ENCODE measurements at regions of chr11 and their contacts with region 1.

Region 1: GRCh38 chr11:62665075-62665598 is at the starts of genes C11orf98 and CSKMT:
- DNase-seq: peak; percentile 95
- H3K4me3 ChIP-seq: peak within 1 kb of the TSS; percentile 42 to 83 (median 59)
- H3K27ac ChIP-seq: peak within 1 kb of the TSS; percentile 44
- H3K4me1 ChIP-seq: peaks cover 16% of the 10 kb centered on the region
- H3K27me3 ChIP-seq: no peaks in the 10 kb centered on the region
- CTCF ChIP-seq: no peak
- POLR2A ChIP-seq: peak; percentile 100
- total RNA-seq, gene C11orf98: 58.7 and 61.0 TPM in 2 replicates
- total RNA-seq, gene CSKMT: 28.4 and 38.1 TPM in 2 replicates

Region 2: DNA sequence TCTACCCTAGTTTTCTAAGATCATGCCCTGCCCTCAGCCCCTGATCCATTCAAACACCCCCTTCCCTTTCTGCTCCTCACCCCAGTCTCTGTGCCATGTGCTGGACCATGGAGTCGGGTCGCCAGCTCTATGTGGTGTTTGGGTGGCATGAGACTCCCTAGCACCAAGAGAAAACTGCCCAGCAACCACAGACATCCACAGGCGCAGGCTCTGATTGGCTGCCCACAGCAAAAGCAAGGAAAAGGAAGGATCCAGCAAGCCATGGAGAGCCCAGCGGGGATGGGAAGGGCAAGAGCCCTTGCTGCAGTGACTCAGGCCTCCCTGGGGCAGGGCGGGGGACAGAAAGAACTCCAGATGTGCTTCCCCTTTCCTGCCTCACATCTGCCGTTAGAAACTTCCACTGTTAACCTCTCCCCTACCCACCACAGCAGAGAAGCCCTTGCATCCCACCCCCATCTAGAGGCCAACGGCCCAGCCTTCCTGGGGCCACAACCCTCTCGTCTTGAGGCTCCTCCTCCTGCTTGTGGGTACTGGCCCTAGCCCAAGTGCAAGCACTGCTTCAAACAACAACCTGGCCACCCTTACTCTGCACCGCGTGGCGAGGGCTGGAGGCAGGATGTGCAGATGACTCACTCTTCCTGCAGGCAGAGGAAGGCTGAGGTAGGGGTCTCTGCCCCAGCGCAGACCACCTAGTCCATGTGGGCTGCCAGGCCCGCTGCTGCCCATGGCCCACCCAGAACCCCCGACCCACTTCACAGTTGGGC is 108.8 kb before region 1 on chr11:
- CTCF ChIA-PET with region 1: no interaction called
- POLR2A ChIA-PET with region 1: interaction called, 10 read pairs
- dilution Hi-C with region 1: no loop called
- intact Hi-C with region 1: no loop called
- DNase-seq: peak; percentile 94
- H3K4me3 ChIP-seq: peak overlapping the region in 1 of 3 experiments; percentile 6
- H3K27ac ChIP-seq: peak overlapping the region; percentile 56
- H3K4me1 ChIP-seq: peaks cover 75% of the 10 kb centered on the region
- H3K27me3 ChIP-seq: no peaks in the 10 kb centered on the region
- CTCF ChIP-seq: no peak
- POLR2A ChIP-seq: peak; percentile 80

Region 3: GRCh38 chr11:62601394-62602140 is 63.6 kb before region 1 on chr11 and contains the start of gene MTA2:
- CTCF ChIA-PET with region 1: no interaction called
- POLR2A ChIA-PET with region 1: interaction called, 18 read pairs
- dilution Hi-C with region 1: no loop called
- intact Hi-C with region 1: no loop called
- DNase-seq: peak; percentile 99
- H3K4me3 ChIP-seq: peak within 1 kb of the TSS; percentile 61 to 98 (median 92)
- H3K27ac ChIP-seq: peak within 1 kb of the TSS; percentile 54
- H3K4me1 ChIP-seq: peaks cover 19% of the 10 kb centered on the region
- H3K27me3 ChIP-seq: no peaks in the 10 kb centered on the region
- CTCF ChIP-seq: no peak
- POLR2A ChIP-seq: peak; percentile 75
- total RNA-seq, gene MTA2: 166 and 176 TPM in 2 replicates

Region 4: GRCh38 chr11:62645956-62646824 is 18.9 kb before region 1 on chr11 and contains the start of gene GANAB:
- CTCF ChIA-PET with region 1: no interaction called
- POLR2A ChIA-PET with region 1: interaction called, 41 read pairs
- dilution Hi-C with region 1: no loop called
- intact Hi-C with region 1: no loop called
- DNase-seq: peak; percentile 97
- H3K4me3 ChIP-seq: peak within 1 kb of the TSS; percentile 62 to 87 (median 65)
- H3K27ac ChIP-seq: peak within 1 kb of the TSS; percentile 80
- H3K4me1 ChIP-seq: peaks cover 11% of the 10 kb centered on the region
- H3K27me3 ChIP-seq: no peaks in the 10 kb centered on the region
- CTCF ChIP-seq: no peak
- POLR2A ChIP-seq: peak; percentile 97
- total RNA-seq, gene GANAB: 357 and 389 TPM in 2 replicates

Region 5: DNA sequence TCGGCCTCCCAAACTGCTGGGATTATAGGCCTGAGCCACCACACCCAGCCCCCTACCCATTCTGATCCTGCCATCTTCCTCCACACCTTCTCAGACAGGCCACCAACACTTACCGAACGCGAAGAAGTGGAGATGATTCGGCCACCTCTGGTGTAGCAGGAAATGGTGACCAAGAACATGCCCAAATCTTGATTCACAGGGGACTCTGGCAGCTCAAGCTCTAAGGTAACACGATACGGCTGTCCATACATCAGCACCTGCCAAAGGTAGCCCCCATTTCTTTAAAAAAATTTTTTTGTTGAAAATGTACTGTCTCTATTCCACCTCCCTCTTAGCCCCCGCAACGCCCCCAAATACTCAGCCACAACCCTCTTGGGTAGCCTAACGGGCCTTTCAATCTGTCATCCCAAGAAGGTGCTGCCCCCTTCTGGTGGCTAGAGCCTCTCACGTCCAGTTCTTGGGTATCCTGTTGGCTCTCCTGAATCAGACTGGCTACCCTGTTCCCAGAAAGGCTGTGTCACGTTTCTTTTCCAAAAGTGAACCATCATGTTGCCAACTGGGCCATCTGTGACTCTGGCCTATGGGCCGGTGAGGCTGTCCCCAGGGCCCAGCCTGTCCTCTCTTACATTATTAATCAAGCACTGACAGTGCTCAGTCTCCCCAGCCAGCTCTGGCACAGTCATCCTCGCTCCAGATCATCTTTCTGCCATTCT is 29.5 kb after region 1 on chr11:
- CTCF ChIA-PET with region 1: interaction called, 10 read pairs
- POLR2A ChIA-PET with region 1: interaction called, 4 read pairs
- dilution Hi-C with region 1: no loop called
- intact Hi-C with region 1: no loop called
- DNase-seq: peak; percentile 68
- H3K4me3 ChIP-seq: no peak overlapping the region
- H3K27ac ChIP-seq: no peak overlapping the region
- H3K4me1 ChIP-seq: no peaks in the 10 kb centered on the region
- H3K27me3 ChIP-seq: no peaks in the 10 kb centered on the region
- CTCF ChIP-seq: peak; percentile 80 to 83
- POLR2A ChIP-seq: no peak

Region 6: DNA sequence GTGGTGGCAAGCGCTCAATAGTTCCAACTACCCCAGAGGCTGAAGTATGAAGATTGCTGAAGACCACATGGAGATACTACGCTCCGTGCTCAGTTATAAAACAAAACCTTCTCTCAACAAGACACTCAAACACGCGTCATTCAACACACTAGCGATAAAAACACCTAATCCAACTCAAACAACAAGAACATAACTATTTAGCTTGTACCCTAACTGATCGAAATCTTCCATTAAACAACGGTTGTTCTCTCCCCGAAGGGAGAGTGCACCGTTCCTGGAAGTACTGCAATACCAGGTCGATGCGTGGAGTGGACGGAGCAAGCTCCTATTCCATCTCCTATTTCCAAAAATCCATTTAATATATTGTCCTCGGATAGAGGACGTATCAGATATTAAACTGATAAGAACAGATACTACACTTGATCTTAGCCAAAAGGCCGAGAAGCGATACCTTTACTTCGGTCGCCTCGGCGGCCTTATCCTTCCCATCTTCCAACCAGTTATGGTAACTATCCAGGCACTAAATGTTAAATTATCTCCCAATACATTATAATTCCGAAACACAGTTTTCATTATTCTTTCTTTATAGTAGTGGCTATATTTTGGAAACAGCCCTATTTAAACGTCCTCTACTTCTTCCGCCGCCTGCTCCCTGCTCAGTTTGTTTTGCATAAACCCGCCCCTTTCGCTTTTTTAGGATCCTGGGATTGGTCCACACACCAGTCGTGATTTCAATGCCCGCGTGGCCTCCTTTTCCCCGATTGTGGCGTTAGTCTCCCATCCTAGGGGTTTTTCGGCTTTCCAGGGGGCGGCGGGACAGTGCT is 176.4 kb after region 1 on chr11:
- CTCF ChIA-PET with region 1: no interaction called
- POLR2A ChIA-PET with region 1: interaction called, 11 read pairs
- dilution Hi-C with region 1: no loop called
- intact Hi-C with region 1: no loop called
- DNase-seq: peak; percentile 99
- H3K4me3 ChIP-seq: peak overlapping the region in 2 of 3 experiments; percentile 9 to 15
- H3K27ac ChIP-seq: peak overlapping the region; percentile 89
- H3K4me1 ChIP-seq: peaks cover 7% of the 10 kb centered on the region
- H3K27me3 ChIP-seq: no peaks in the 10 kb centered on the region
- CTCF ChIP-seq: no peak
- POLR2A ChIP-seq: peak; percentile 100

Region 7: GRCh38 chr11:62925745-62926679 is 260.9 kb after region 1 on chr11:
- CTCF ChIA-PET with region 1: no interaction called
- POLR2A ChIA-PET with region 1: no interaction called
- dilution Hi-C with region 1: no loop called
- intact Hi-C with region 1: no loop called
- DNase-seq: no peak
- H3K4me3 ChIP-seq: peak overlapping the region in 2 of 3 experiments; percentile 17 to 22
- H3K27ac ChIP-seq: no peak overlapping the region
- H3K4me1 ChIP-seq: peaks cover 6% of the 10 kb centered on the region
- H3K27me3 ChIP-seq: peaks cover 37 to 52% of the 10 kb centered on the region in 2 experiments
- CTCF ChIP-seq: no peak
- POLR2A ChIP-seq: no peak

Measured in endothelial cell of umbilical vein (primary cell).